ENCODE measurements at regions of chr12 and their contacts with region 1.

Region 1: DNA sequence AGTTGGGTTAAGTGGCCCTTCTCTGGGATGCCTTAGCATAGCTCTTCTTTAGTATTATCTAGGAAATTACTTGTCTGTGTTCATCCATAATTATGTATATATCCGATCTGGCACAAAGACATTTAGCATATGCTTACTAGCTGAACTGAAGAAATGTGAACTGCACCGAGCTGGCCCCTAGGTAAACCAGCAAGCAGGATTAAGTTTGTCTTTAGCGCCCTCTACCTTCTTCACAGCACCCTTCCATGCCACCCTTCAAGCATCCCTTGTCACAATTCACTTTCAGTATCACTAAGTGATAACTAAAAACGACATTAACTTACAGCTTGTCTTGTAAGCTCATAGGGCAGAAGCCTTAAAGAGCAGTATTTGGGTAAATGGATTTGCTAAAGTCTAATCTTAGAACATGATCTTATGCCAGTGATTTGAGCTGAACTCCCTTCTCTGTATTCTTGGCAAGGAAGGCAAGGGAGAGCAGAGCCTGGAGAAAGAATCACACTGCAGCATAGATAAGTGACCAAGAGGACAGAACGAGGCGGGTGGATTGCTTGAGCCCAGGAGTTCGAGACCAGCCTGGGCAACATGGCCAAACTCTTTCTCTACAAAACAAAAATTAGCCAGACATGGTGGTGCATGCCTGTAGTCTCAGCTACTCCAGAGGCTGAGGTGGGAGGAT is 2.6 kb upstream of the HAL start:
- DNase-seq: peak; percentile 40
- H3K4me3 ChIP-seq: no peak overlapping the region
- H3K27ac ChIP-seq: no peak overlapping the region
- H3K4me1 ChIP-seq: peaks cover 16% of the 10 kb centered on the region
- H3K27me3 ChIP-seq: no peaks in the 10 kb centered on the region
- CTCF ChIP-seq: peak; percentile 73 to 74

Region 2: DNA sequence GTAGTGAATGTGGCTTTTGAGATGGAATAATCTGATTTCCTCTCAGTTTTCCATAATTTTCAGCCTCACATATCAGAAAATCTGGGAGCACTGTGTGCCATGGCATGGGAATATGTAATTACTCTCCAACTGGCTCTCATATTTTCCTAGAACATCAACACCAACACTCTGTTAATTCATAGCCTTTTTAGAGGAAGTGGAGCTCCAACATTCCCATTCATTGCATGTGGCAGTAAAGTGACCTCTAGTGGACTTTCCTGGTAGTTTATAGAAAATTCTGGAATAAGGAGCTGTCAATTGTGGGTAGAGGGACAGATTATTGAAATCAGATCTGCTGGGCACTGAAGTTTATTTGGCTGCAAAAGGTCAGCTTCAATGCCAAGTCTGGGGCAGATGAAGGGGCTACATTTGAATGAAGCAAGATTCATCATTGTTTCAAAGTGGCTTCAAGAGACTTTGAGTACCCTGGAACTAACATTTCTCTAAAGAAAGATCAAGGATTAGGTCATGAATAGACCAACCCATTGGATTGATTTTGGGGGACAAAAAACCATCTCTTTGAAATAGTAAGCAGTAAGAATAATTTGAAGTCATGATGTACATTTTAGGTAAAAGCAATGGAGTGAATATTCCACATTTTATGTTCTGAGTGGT is 423.8 kb before region 1 on chr12:
- CTCF ChIA-PET with region 1: no interaction called
- dilution Hi-C with region 1: no loop called
- in situ Hi-C with region 1: loop called in 1 of 2 experiments (anchors 25 kb)
- intact Hi-C with region 1: no loop called
- DNase-seq: peak; percentile 34
- H3K4me3 ChIP-seq: no peak overlapping the region
- H3K27ac ChIP-seq: no peak overlapping the region
- H3K4me1 ChIP-seq: no peaks in the 10 kb centered on the region
- H3K27me3 ChIP-seq: no peaks in the 10 kb centered on the region
- CTCF ChIP-seq: peak; percentile 64 to 77

Region 3: GRCh38 chr12:95582230-95583058 is 416.3 kb before region 1 on chr12:
- CTCF ChIA-PET with region 1: no interaction called
- dilution Hi-C with region 1: no loop called
- in situ Hi-C with region 1: loop called in 1 of 2 experiments (anchors 25 kb)
- intact Hi-C with region 1: loop called (anchors 2 kb)
- DNase-seq: peak; percentile 23
- H3K4me3 ChIP-seq: no peak overlapping the region
- H3K27ac ChIP-seq: no peak overlapping the region
- H3K4me1 ChIP-seq: no peaks in the 10 kb centered on the region
- H3K27me3 ChIP-seq: no peaks in the 10 kb centered on the region
- CTCF ChIP-seq: peak; percentile 45 to 53

Region 4: DNA sequence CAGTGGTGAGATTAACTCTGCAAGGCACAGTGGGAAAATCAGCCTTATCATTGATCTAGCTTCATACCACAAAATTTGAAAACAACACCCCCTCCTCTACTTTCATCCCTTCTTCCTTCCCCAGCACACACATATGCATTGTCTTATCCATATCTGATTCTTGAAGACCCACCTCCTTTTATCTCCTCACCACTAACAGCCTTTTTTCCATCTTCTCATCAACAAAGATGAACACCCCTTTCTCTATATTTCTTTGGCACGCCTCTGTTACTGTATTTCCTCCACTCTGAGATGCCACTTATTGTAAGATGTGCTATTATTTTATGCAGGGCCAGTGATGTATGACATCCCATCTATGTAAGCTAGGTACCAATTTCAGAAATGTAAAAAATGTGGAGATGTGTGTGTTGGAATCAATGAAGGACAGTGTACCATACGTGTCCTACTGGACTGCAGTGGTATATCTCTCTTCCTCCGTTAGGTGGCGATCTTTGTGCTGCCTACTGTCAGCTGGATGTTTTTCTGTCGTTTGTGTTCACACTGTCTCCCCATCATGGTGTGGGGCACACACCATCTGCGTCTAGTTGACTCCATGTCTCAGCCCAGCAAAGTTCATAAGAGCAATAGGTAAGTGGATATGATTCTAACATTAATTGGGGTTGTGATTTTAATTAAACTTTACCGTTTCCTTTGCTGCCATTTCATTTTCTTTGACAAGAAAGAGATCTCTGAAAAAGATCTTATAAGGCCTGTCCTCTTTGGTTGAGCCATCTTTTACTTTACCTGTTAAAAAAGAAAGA is 80.4 kb before region 1 on chr12:
- CTCF ChIA-PET with region 1: interaction called, 19 read pairs
- dilution Hi-C with region 1: no loop called
- in situ Hi-C with region 1: loop called in 1 of 2 experiments (anchors 10 kb)
- intact Hi-C with region 1: loop called (anchors 1 kb)
- DNase-seq: peak; percentile 57
- H3K4me3 ChIP-seq: no peak overlapping the region
- H3K27ac ChIP-seq: no peak overlapping the region
- H3K4me1 ChIP-seq: no peaks in the 10 kb centered on the region
- H3K27me3 ChIP-seq: no peaks in the 10 kb centered on the region
- CTCF ChIP-seq: peak; percentile 92

Region 5: GRCh38 chr12:95942524-95943329 is 56.0 kb before region 1 on chr12 and contains the start of gene CCDC38:
- CTCF ChIA-PET with region 1: interaction called, 16 read pairs
- dilution Hi-C with region 1: no loop called
- in situ Hi-C with region 1: no loop called
- intact Hi-C with region 1: no loop called
- DNase-seq: peak; percentile 77
- H3K4me3 ChIP-seq: peak within 1 kb of the TSS; percentile 57 to 85 (median 74)
- H3K27ac ChIP-seq: peak within 1 kb of the TSS; percentile 59
- H3K4me1 ChIP-seq: peaks cover 4% of the 10 kb centered on the region
- H3K27me3 ChIP-seq: no peaks in the 10 kb centered on the region
- CTCF ChIP-seq: no peak
- total RNA-seq, gene CCDC38: 0.17 TPM in 1 of 2 donors, not detected in the other

Region 6: DNA sequence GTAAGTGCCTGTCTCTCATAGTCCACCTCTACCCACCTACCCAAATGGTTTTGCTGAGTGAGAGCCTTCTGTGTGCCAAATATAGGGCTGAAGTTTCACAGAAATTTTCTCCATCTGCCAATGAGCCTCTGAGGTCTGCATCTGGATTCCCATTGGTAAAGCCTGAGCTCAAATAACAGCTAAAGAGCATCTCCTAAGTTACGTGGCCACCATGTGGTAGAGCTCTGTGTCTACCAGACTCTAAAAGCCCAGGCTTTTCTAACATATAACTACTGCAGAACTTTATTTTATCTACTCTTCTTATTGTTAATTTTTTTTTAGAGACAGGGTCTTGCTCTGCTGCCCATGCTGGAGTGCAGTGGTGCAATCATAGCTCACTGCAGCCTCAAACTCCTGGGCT is 39.6 kb before region 1 on chr12:
- CTCF ChIA-PET with region 1: interaction called, 5 read pairs
- dilution Hi-C with region 1: no loop called
- in situ Hi-C with region 1: no loop called
- intact Hi-C with region 1: loop called (anchors 2 kb)
- DNase-seq: peak; percentile 12
- H3K4me3 ChIP-seq: no peak overlapping the region
- H3K27ac ChIP-seq: no peak overlapping the region
- H3K4me1 ChIP-seq: no peaks in the 10 kb centered on the region
- H3K27me3 ChIP-seq: no peaks in the 10 kb centered on the region
- CTCF ChIP-seq: peak; percentile 15 to 29

Region 7: GRCh38 chr12:96054244-96054610 is 55.5 kb after region 1 on chr12:
- CTCF ChIA-PET with region 1: no interaction called
- dilution Hi-C with region 1: no loop called
- in situ Hi-C with region 1: no loop called
- intact Hi-C with region 1: no loop called
- DNase-seq: no peak
- H3K4me3 ChIP-seq: no peak overlapping the region
- H3K27ac ChIP-seq: no peak overlapping the region
- H3K4me1 ChIP-seq: no peaks in the 10 kb centered on the region
- H3K27me3 ChIP-seq: no peaks in the 10 kb centered on the region
- CTCF ChIP-seq: no peak